Activated CD4-positive, alpha-beta T cell treated with anti-CD3 and anti-CD28 coated beads, Interleukin-2, amount 10 ng/mL, durations not matched to agents 24 days and 14 days (primary cell): ENCODE measurements at regions of chr14 and their contacts with region 1.

Region 1: DNA sequence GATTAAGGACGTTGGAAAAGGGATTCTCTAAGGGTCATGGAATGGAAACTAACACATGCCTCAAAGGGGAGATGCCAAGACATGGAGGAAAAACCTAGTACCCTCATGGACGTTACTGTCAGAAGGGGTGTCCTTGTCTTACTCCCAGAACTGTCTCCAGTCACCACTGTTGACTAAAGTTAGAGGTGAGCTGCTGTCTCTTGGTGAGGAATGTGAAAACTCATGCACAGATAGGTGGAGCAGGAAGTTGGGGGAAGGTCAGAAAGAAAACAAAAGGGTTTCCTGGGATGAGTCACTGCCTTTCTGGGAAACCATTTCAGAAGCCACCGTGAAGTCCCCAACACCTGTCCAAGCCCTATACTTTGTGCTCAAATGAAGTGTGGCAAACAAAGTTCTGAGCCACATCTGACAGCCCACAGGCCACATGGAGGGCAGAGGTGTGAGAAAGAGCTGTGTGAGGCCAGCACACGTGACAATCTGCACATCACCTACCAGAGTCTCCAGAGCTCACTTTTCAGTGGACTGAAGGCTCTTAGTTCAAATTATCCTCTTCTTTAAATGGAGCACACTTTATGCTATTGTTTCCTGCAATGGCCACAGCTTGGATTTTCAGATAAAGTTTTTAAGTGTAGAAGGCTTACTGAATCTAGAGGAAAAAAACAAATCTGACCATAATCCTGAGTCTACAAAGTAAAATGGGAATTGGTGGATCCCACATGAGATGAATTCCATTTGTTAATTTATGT is 92.9 kb upstream of the EGLN3 start:
- DNase-seq: peak; percentile 97
- H3K4me3 Mint-ChIP-seq: peak overlapping the region; percentile 64
- H3K27ac Mint-ChIP-seq: peak overlapping the region; percentile 86
- H3K4me1 Mint-ChIP-seq: peaks cover 63% of the 10 kb centered on the region
- H3K27me3 Mint-ChIP-seq: no peaks in the 10 kb centered on the region

Region 2: GRCh38 chr14:33839193-33840076 is 204.4 kb before region 1 on chr14:
- intact Hi-C with region 1: loop called (anchors 5 kb)
- DNase-seq: peak; percentile 89
- H3K4me3 Mint-ChIP-seq: no peak overlapping the region
- H3K27ac Mint-ChIP-seq: no peak overlapping the region
- H3K4me1 Mint-ChIP-seq: peaks cover 38% of the 10 kb centered on the region
- H3K27me3 Mint-ChIP-seq: no peaks in the 10 kb centered on the region

Region 3: GRCh38 chr14:33950320-33951182 is 93.2 kb before region 1 on chr14 and contains the start of gene EGLN3:
- intact Hi-C with region 1: loop called (anchors 5 kb)
- DNase-seq: peak; percentile 95
- H3K4me3 Mint-ChIP-seq: peak within 1 kb of the TSS; percentile 87
- H3K27ac Mint-ChIP-seq: peak within 1 kb of the TSS; percentile 75
- H3K4me1 Mint-ChIP-seq: peaks cover 36% of the 10 kb centered on the region
- H3K27me3 Mint-ChIP-seq: peaks cover 47% of the 10 kb centered on the region
- total RNA-seq, gene EGLN3: 17.4 and 17.6 TPM in 2 replicates

Region 4: GRCh38 chr14:34018564-34019244 is 25.1 kb before region 1 on chr14:
- intact Hi-C with region 1: loop called (anchors 1 kb)
- DNase-seq: peak; percentile 78
- H3K4me3 Mint-ChIP-seq: peak overlapping the region; percentile 88
- H3K27ac Mint-ChIP-seq: peak overlapping the region; percentile 97
- H3K4me1 Mint-ChIP-seq: peaks cover 30% of the 10 kb centered on the region
- H3K27me3 Mint-ChIP-seq: peaks cover 2% of the 10 kb centered on the region

Region 5: DNA sequence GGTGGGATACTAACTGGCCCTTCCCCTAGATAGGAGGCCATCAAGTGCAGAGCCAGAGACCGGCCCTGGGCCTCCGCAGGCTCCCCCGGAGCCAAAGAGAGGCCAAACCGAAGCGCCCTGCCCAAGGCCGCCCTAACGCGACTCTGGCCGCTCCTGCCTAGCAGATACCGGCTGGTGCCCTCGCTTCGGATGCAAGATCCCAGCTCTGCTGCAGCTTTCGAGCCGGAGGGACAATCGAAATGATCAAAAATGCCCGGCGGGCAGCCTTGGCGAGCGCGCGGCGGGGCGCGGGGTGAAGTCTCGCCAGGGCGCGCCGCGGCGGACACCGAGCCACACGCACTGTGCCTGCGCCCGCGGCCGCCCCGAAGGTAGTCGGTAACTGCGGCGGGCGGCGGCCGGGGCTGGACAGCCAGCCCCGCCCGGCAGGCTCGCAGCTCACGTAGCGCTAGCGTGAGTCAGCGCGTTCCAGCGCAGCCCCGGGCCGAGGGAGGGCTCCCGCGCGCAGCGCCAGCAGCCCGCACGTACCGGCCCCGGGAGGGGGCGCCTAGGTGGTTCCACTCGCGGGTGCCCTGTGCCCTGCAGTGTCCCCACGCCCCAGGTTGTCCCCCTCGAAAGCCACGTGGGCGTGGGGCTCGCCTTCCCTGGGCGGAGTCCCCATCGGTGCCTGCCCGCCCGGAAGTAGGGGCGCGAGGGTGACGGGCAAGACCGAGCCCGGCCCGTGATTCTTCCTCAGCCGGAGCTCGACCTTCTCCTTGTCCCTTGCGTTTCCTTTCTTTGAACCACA is 16.2 kb after region 1 on chr14:
- intact Hi-C with region 1: loop called (anchors 2 kb)
- DNase-seq: peak; percentile 91
- H3K4me3 Mint-ChIP-seq: peak overlapping the region; percentile 86
- H3K27ac Mint-ChIP-seq: peak overlapping the region; percentile 87
- H3K4me1 Mint-ChIP-seq: peaks cover 35% of the 10 kb centered on the region
- H3K27me3 Mint-ChIP-seq: peaks cover 10% of the 10 kb centered on the region

Region 6: GRCh38 chr14:34098045-34098984 is 54.5 kb after region 1 on chr14:
- intact Hi-C with region 1: loop called (anchors 10 kb)
- DNase-seq: peak; percentile 82
- H3K4me3 Mint-ChIP-seq: no peak overlapping the region
- H3K27ac Mint-ChIP-seq: peak overlapping the region; percentile 12
- H3K4me1 Mint-ChIP-seq: peaks cover 42% of the 10 kb centered on the region
- H3K27me3 Mint-ChIP-seq: peaks cover 2% of the 10 kb centered on the region

Region 7: GRCh38 chr14:34120238-34120977 is 76.6 kb after region 1 on chr14:
- intact Hi-C with region 1: no loop called
- DNase-seq: no peak
- H3K4me3 Mint-ChIP-seq: no peak overlapping the region
- H3K27ac Mint-ChIP-seq: no peak overlapping the region
- H3K4me1 Mint-ChIP-seq: peaks cover 4% of the 10 kb centered on the region
- H3K27me3 Mint-ChIP-seq: peaks cover 19% of the 10 kb centered on the region

Region 8: DNA sequence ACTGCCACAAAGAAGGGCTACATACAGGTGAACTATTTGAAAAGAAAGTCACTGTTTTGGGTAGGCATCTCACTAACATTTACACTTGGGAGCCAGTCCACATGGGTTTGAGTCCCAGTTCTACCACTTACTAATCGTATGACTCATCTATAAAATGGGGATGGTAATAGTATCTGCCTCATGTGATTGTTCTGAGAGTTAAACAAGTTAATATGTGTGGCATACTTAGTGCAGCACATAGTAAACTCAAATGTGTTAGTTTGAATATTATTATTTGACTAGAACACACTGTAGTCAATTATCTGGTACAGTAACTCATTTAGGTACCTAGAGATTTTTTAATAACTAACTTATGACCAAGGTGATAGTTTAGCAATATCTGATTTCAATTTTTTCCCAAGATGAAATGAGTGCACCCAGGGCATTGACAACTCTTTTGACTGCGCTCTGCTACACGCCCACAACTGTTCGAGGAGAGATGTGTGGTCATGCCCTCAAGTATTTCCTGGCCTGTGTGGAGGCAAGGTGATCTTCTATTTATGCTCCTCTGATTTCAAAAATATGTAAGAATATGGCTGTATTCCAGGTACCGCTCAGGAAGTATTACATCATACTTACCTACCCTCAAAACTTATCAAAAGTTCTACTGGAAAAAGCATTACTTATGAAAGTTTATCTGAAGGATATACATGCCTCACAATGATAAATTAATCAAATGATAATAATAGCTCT is 117.7 kb after region 1 on chr14:
- intact Hi-C with region 1: no loop called
- DNase-seq: no peak
- H3K4me3 Mint-ChIP-seq: no peak overlapping the region
- H3K27ac Mint-ChIP-seq: no peak overlapping the region
- H3K4me1 Mint-ChIP-seq: peaks cover 11% of the 10 kb centered on the region
- H3K27me3 Mint-ChIP-seq: peaks cover 5% of the 10 kb centered on the region

Region 9: DNA sequence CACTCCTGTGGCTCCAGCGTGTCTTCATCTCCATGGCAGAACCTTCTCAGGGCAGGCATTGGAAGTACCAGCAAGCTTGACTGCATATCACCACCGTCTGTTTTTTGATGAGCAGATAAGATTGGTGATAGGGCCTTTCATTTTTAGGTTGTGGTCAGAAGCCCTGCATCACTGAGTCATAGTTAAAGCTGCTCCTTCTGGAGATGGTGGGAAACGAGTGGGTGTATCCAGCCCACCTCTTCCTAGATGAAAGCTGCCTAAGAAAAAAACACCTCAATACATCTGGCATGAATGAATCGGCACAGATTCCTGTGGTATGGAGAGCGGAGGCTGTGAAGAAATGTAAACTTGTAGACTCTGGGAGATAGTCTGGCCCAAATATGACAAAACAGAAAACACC is 155.8 kb after region 1 on chr14:
- intact Hi-C with region 1: loop called (anchors 5 kb)
- DNase-seq: peak; percentile 65
- H3K4me3 Mint-ChIP-seq: no peak overlapping the region
- H3K27ac Mint-ChIP-seq: peak overlapping the region; percentile 31
- H3K4me1 Mint-ChIP-seq: peaks cover 32% of the 10 kb centered on the region
- H3K27me3 Mint-ChIP-seq: peaks cover 8% of the 10 kb centered on the region